CD14-positive monocyte (primary cell): ENCODE measurements at regions of chrX and their contacts with region 1.

Region 1: GRCh38 chrX:56802921-56803849 is 74.1 kb downstream of the NBDY start:
- DNase-seq: peak; percentile 44 to 66 (median 53)
- H3K4me3 ChIP-seq: peak overlapping the region in 2 of 3 experiments; percentile 50 to 77
- H3K4me3 Mint-ChIP-seq: peak overlapping the region; percentile 72 to 87
- H3K27ac ChIP-seq: peak overlapping the region in 1 of 2 donors; percentile 46
- H3K27ac Mint-ChIP-seq: peak overlapping the region in 4 of 7 donors; percentile 20 to 86 (median 54)
- H3K4me1 ChIP-seq: peaks cover 13 to 26% of the 10 kb centered on the region in 2 donors
- H3K4me1 Mint-ChIP-seq: peaks cover 32% of the 10 kb centered on the region
- H3K27me3 ChIP-seq: no peaks in the 10 kb centered on the region
- H3K27me3 Mint-ChIP-seq: peaks cover 0 to 24% (median 0%) of the 10 kb centered on the region in 3 donors
- CTCF ChIP-seq: peak; percentile 59

Region 2: GRCh38 chrX:56057325-56057724 is 745.9 kb before region 1 on chrX:
- intact Hi-C with region 1: no loop called
- DNase-seq: no peak
- H3K4me3 ChIP-seq: no peak overlapping the region
- H3K4me3 Mint-ChIP-seq: no peak overlapping the region
- H3K27ac ChIP-seq: no peak overlapping the region
- H3K27ac Mint-ChIP-seq: no peak overlapping the region
- H3K4me1 ChIP-seq: no peaks in the 10 kb centered on the region
- H3K4me1 Mint-ChIP-seq: no peaks in the 10 kb centered on the region
- H3K27me3 ChIP-seq: no peaks in the 10 kb centered on the region
- H3K27me3 Mint-ChIP-seq: peaks cover 0 to 2% (median 0%) of the 10 kb centered on the region in 3 donors
- CTCF ChIP-seq: no peak

Region 3: GRCh38 chrX:56744996-56745395 is 58.2 kb before region 1 on chrX:
- intact Hi-C with region 1: no loop called
- DNase-seq: peak in 2 of 3 donors; percentile 35 to 74
- H3K4me3 ChIP-seq: no peak overlapping the region
- H3K4me3 Mint-ChIP-seq: peak overlapping the region in 1 of 2 donors; percentile 68
- H3K27ac ChIP-seq: peak overlapping the region in 1 of 2 donors; percentile 33
- H3K27ac Mint-ChIP-seq: peak overlapping the region in 1 of 7 donors; percentile 57
- H3K4me1 ChIP-seq: peaks cover 3 to 5% of the 10 kb centered on the region in 2 donors
- H3K4me1 Mint-ChIP-seq: peaks cover 11% of the 10 kb centered on the region
- H3K27me3 ChIP-seq: peaks cover 0 to 18% of the 10 kb centered on the region in 2 donors
- H3K27me3 Mint-ChIP-seq: peaks cover 0 to 12% (median 0%) of the 10 kb centered on the region in 3 donors
- CTCF ChIP-seq: no peak

Region 4: GRCh38 chrX:56833626-56834025 is 30.4 kb after region 1 on chrX:
- intact Hi-C with region 1: no loop called
- DNase-seq: no peak
- H3K4me3 ChIP-seq: no peak overlapping the region
- H3K4me3 Mint-ChIP-seq: no peak overlapping the region
- H3K27ac ChIP-seq: no peak overlapping the region
- H3K27ac Mint-ChIP-seq: no peak overlapping the region
- H3K4me1 ChIP-seq: no peaks in the 10 kb centered on the region
- H3K4me1 Mint-ChIP-seq: no peaks in the 10 kb centered on the region
- H3K27me3 ChIP-seq: peaks cover 0 to 2% of the 10 kb centered on the region in 2 donors
- H3K27me3 Mint-ChIP-seq: peaks cover 0 to 9% (median 0%) of the 10 kb centered on the region in 3 donors
- CTCF ChIP-seq: no peak

Region 5: GRCh38 chrX:56978172-56978571 is 175.0 kb after region 1 on chrX:
- intact Hi-C with region 1: loop called (anchors 2 to 5 kb)
- DNase-seq: peak; percentile 12 to 21 (median 16)
- H3K4me3 ChIP-seq: no peak overlapping the region
- H3K4me3 Mint-ChIP-seq: no peak overlapping the region
- H3K27ac ChIP-seq: no peak overlapping the region
- H3K27ac Mint-ChIP-seq: no peak overlapping the region
- H3K4me1 ChIP-seq: no peaks in the 10 kb centered on the region
- H3K4me1 Mint-ChIP-seq: no peaks in the 10 kb centered on the region
- H3K27me3 ChIP-seq: peaks cover 0 to 2% of the 10 kb centered on the region in 2 donors
- H3K27me3 Mint-ChIP-seq: peaks cover 0 to 8% (median 0%) of the 10 kb centered on the region in 3 donors
- CTCF ChIP-seq: peak; percentile 50